CD4-positive, alpha-beta memory T cell (primary cell): ENCODE measurements at regions of chr1 and their contacts with region 1.

Region 1: DNA sequence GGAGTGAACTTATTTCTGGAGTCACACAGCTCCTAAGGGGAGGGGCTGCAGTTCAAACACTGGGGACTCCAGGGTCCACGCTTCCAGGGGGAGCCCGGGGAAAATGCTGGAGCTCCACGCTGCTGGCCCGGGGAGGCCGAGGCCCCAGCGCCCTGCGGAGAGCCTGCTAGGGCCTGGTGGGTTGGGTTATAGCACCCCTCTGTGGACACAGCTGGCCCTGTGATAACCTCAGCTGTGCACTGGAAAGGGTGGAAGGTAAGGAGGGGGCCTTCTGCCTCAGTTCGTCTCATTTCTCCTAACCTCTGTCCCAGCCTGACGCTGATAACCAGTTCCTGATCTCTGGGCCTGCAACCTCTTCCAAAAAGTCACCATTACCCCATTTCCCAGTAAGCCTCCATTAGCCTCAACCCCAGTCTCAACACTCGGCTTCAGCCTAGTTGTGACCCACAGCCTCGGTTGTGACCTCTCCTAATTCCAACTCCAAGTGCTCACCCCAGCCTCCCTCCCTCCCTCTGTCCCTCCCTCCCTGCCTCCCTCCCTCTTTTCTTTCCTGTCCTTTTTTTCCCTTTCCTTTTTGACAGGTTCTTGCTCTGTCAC is 7.1 kb downstream of the NBL1 start:
- DNase-seq: peak; percentile 35 to 48 (median 47)
- H3K4me3 ChIP-seq: no peak overlapping the region
- H3K4me3 Mint-ChIP-seq: no peak overlapping the region
- H3K27ac ChIP-seq: no peak overlapping the region
- H3K27ac Mint-ChIP-seq: peak overlapping the region in 3 of 7 donors; percentile 23 to 78 (median 57)
- H3K4me1 ChIP-seq: peaks cover 18% of the 10 kb centered on the region
- H3K4me1 Mint-ChIP-seq: peaks cover 15 to 45% (median 24%) of the 10 kb centered on the region in 4 donors
- H3K27me3 ChIP-seq: no peaks in the 10 kb centered on the region
- H3K27me3 Mint-ChIP-seq: no peaks in the 10 kb centered on the region

Region 2: DNA sequence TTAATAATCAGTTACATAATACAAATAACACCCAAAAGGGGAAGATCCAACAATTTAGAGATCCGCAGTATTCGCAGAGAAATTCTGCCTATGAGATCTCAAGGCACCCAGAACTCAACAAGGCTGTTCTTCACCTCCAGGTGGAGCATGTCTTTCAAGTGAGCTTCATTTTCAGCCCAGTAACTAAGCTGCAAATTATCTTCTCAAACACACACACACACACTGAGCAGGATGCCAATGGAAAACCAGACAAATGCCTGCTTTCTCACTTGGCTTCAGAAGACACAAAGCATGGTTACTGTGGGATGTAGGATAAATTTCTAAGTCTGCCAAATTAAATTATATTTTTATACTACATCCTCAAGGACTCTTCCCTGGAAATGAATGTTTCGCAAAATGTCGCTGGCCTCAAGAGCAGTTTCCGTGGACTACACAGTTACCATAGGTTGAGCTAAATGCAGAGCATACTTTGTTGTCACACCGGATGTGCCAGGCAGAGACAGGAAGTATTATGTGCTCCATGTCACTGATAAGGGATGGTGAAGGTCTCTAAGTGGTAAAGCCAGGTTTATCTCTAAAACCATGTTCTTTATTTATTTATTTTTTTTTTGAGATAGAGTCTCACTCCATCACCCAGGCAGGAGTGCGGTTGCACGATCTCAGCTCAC is 471.5 kb before region 1 on chr1:
- CTCF ChIA-PET with region 1: interaction called, 9 read pairs
- POLR2A ChIA-PET with region 1: no interaction called
- intact Hi-C with region 1: loop called (anchors 1 kb)
- DNase-seq: peak; percentile 23 to 55 (median 36)
- H3K4me3 ChIP-seq: no peak overlapping the region
- H3K4me3 Mint-ChIP-seq: peak overlapping the region in 3 of 8 donors; percentile 34 to 49 (median 39)
- H3K27ac ChIP-seq: no peak overlapping the region
- H3K27ac Mint-ChIP-seq: peak overlapping the region; percentile 4 to 88 (median 77)
- H3K4me1 ChIP-seq: peaks cover 15% of the 10 kb centered on the region
- H3K4me1 Mint-ChIP-seq: peaks cover 14 to 33% (median 25%) of the 10 kb centered on the region in 4 donors
- H3K27me3 ChIP-seq: no peaks in the 10 kb centered on the region
- H3K27me3 Mint-ChIP-seq: no peaks in the 10 kb centered on the region

Region 3: GRCh38 chr1:19347533-19348172 is 303.6 kb before region 1 on chr1:
- CTCF ChIA-PET with region 1: interaction called, 11 read pairs
- POLR2A ChIA-PET with region 1: no interaction called
- intact Hi-C with region 1: no loop called
- DNase-seq: no peak
- H3K4me3 ChIP-seq: no peak overlapping the region
- H3K4me3 Mint-ChIP-seq: no peak overlapping the region
- H3K27ac ChIP-seq: no peak overlapping the region
- H3K27ac Mint-ChIP-seq: no peak overlapping the region
- H3K4me1 ChIP-seq: no peaks in the 10 kb centered on the region
- H3K4me1 Mint-ChIP-seq: peaks cover 0 to 8% (median 2%) of the 10 kb centered on the region in 4 donors
- H3K27me3 ChIP-seq: no peaks in the 10 kb centered on the region
- H3K27me3 Mint-ChIP-seq: no peaks in the 10 kb centered on the region

Region 4: GRCh38 chr1:19390901-19391595 is 260.2 kb before region 1 on chr1:
- CTCF ChIA-PET with region 1: interaction called, 8 read pairs
- POLR2A ChIA-PET with region 1: interaction called, 6 read pairs
- intact Hi-C with region 1: loop called (anchors 1 kb)
- DNase-seq: peak; percentile 83 to 88 (median 86)
- H3K4me3 ChIP-seq: peak overlapping the region; percentile 34 to 46
- H3K4me3 Mint-ChIP-seq: peak overlapping the region; percentile 84 to 94 (median 87)
- H3K27ac ChIP-seq: peak overlapping the region; percentile 64
- H3K27ac Mint-ChIP-seq: peak overlapping the region; percentile 92 to 99 (median 96)
- H3K4me1 ChIP-seq: peaks cover 89% of the 10 kb centered on the region
- H3K4me1 Mint-ChIP-seq: peaks cover 56 to 95% (median 78%) of the 10 kb centered on the region in 4 donors
- H3K27me3 ChIP-seq: no peaks in the 10 kb centered on the region
- H3K27me3 Mint-ChIP-seq: no peaks in the 10 kb centered on the region

Region 5: DNA sequence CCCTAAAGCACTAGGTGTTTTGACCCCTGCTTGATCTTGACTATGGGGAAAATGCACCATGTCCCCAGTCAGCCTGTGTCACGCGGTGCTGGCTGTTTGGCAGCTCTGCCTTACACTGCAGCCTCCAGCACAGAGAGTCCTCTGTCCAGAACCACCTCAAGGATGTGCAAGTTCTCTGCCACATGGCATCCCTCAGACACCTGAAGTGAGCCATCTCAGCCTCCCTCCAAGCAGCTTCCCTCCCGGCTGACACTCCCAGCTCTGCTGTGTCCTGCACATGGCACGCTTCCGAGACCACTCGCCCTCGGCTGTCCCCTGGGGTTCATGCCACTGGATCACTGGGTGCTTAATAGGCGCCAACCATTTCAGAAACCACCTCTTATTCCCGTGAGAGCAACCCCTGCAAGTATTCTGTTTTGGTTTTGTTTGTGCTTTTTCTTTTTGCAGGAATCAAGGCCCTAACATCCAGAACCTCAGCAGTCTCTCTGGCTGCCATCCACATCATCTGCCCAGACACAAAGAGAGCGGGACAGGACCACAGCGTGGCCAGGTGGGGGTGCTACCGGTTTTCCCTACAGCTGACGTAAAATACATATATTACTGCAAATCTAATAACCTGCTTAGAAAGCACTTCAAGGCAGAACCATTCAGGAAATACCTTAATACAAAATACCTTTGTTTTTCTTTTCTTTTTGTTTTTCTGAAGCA is 211.6 kb before region 1 on chr1:
- CTCF ChIA-PET with region 1: interaction called, 6 read pairs
- POLR2A ChIA-PET with region 1: no interaction called
- intact Hi-C with region 1: loop called (anchors 5 kb)
- DNase-seq: peak; percentile 38 to 50 (median 42)
- H3K4me3 ChIP-seq: no peak overlapping the region
- H3K4me3 Mint-ChIP-seq: peak overlapping the region in 6 of 8 donors; percentile 22 to 67 (median 36)
- H3K27ac ChIP-seq: peak overlapping the region; percentile 22
- H3K27ac Mint-ChIP-seq: peak overlapping the region; percentile 45 to 88 (median 81)
- H3K4me1 ChIP-seq: peaks cover 91% of the 10 kb centered on the region
- H3K4me1 Mint-ChIP-seq: peaks cover 71 to 98% (median 83%) of the 10 kb centered on the region in 4 donors
- H3K27me3 ChIP-seq: no peaks in the 10 kb centered on the region
- H3K27me3 Mint-ChIP-seq: no peaks in the 10 kb centered on the region

Region 6: DNA sequence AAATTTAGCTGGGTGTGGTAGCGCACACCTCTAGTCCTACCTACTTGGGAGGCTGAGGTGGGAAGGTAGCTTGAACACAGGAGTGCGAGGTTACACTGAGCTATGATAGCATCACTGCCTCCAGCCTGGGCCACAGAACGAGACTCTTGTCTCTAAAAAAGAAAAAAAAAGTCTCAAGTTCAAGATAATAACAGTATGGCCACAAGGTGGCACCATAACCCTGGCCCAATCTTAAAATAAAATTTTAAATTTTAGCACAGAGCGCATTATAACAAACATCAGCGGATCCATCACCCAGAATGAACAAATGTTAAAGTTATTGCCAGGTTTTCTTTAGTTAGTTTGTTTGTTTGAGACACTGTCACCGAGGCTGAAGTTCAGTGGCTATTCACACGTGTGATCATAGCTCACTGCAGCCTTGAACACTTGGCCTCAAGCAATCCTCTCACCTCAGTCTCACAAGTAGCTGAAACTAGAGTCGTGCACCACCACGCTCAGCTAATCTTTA is 10.5 kb after region 1 on chr1:
- CTCF ChIA-PET with region 1: interaction called, 10 read pairs
- POLR2A ChIA-PET with region 1: interaction called, 3 read pairs
- intact Hi-C with region 1: no loop called
- DNase-seq: peak in 4 of 5 donors; percentile 49 to 66 (median 60)
- H3K4me3 ChIP-seq: no peak overlapping the region
- H3K4me3 Mint-ChIP-seq: peak overlapping the region in 1 of 8 donors; percentile 54
- H3K27ac ChIP-seq: no peak overlapping the region
- H3K27ac Mint-ChIP-seq: peak overlapping the region in 2 of 7 donors; percentile 71 to 74
- H3K4me1 ChIP-seq: peaks cover 27% of the 10 kb centered on the region
- H3K4me1 Mint-ChIP-seq: peaks cover 18 to 43% (median 29%) of the 10 kb centered on the region in 4 donors
- H3K27me3 ChIP-seq: no peaks in the 10 kb centered on the region
- H3K27me3 Mint-ChIP-seq: peaks cover 0 to 18% of the 10 kb centered on the region in 2 donors